ENCODE measurements at regions of chr12 and their contacts with region 1.

Region 1: GRCh38 chr12:62917926-62918325 is 17.0 kb downstream of the PPM1H start:
- DNase-seq: no peak
- H3K4me3 ChIP-seq: no peak overlapping the region
- H3K4me3 Mint-ChIP-seq: no peak overlapping the region
- H3K27ac Mint-ChIP-seq: no peak overlapping the region
- H3K4me1 ChIP-seq: peaks cover 13% of the 10 kb centered on the region
- H3K4me1 Mint-ChIP-seq: peaks cover 37% of the 10 kb centered on the region
- H3K27me3 ChIP-seq: no peaks in the 10 kb centered on the region
- H3K27me3 Mint-ChIP-seq: no peaks in the 10 kb centered on the region
- CTCF ChIP-seq: no peak

Region 2: DNA sequence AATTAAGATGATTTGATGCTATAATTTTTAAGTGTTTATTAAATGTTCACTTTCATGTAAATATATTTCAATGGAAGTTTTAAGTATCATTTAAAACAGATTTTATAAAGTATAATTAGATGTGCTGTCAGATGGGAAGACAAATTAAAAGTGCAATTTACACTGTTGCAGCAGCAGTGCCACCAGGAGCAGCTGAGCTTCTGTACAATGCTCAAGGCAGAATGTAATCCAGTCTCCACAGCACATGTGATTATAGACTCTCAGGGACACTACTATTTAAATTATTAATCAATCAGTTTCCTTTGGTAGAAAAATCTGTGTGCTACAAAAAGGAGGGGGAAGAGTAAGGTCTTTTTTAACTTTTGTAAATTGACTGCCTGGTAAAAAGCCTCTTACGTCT is 943.5 kb before region 1 on chr12:
- CTCF ChIA-PET with region 1: no interaction called
- POLR2A ChIA-PET with region 1: no interaction called
- intact Hi-C with region 1: no loop called
- DNase-seq: no peak
- H3K4me3 ChIP-seq: no peak overlapping the region
- H3K4me3 Mint-ChIP-seq: no peak overlapping the region
- H3K27ac Mint-ChIP-seq: no peak overlapping the region
- H3K4me1 ChIP-seq: no peaks in the 10 kb centered on the region
- H3K4me1 Mint-ChIP-seq: no peaks in the 10 kb centered on the region
- H3K27me3 ChIP-seq: no peaks in the 10 kb centered on the region
- H3K27me3 Mint-ChIP-seq: no peaks in the 10 kb centered on the region
- CTCF ChIP-seq: no peak

Region 3: DNA sequence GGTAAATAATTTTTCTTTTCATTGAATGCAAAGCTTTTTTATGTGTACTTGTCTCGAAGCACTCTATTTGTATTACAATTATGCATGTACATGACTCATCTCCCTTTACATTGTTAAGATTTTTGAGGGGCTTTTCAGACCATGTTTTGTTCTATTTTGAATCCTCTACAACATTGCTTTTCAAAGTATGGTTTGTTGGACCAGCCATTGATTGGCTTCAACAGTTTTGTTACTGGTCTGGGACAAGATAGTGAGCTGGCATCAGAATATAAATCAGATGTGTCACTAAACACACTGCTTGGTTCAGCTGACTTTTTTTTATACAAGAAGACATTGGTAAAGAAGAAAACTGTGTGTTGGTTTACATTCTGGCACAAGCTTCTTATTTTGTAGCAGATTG is 329.0 kb before region 1 on chr12:
- CTCF ChIA-PET with region 1: no interaction called
- POLR2A ChIA-PET with region 1: no interaction called
- intact Hi-C with region 1: no loop called
- DNase-seq: no peak
- H3K4me3 ChIP-seq: no peak overlapping the region
- H3K4me3 Mint-ChIP-seq: no peak overlapping the region
- H3K27ac Mint-ChIP-seq: no peak overlapping the region
- H3K4me1 ChIP-seq: no peaks in the 10 kb centered on the region
- H3K4me1 Mint-ChIP-seq: no peaks in the 10 kb centered on the region
- H3K27me3 ChIP-seq: no peaks in the 10 kb centered on the region
- H3K27me3 Mint-ChIP-seq: no peaks in the 10 kb centered on the region
- CTCF ChIP-seq: no peak

Region 4: GRCh38 chr12:62744551-62744950 is 173.4 kb before region 1 on chr12:
- CTCF ChIA-PET with region 1: no interaction called
- POLR2A ChIA-PET with region 1: no interaction called
- intact Hi-C with region 1: no loop called
- DNase-seq: no peak
- H3K4me3 ChIP-seq: no peak overlapping the region
- H3K4me3 Mint-ChIP-seq: no peak overlapping the region
- H3K27ac Mint-ChIP-seq: no peak overlapping the region
- H3K4me1 ChIP-seq: peaks cover 10% of the 10 kb centered on the region; the same call in 1 of the 2 replicates
- H3K4me1 Mint-ChIP-seq: peaks cover 18% of the 10 kb centered on the region
- H3K27me3 ChIP-seq: no peaks in the 10 kb centered on the region
- H3K27me3 Mint-ChIP-seq: no peaks in the 10 kb centered on the region
- CTCF ChIP-seq: no peak

Region 5: DNA sequence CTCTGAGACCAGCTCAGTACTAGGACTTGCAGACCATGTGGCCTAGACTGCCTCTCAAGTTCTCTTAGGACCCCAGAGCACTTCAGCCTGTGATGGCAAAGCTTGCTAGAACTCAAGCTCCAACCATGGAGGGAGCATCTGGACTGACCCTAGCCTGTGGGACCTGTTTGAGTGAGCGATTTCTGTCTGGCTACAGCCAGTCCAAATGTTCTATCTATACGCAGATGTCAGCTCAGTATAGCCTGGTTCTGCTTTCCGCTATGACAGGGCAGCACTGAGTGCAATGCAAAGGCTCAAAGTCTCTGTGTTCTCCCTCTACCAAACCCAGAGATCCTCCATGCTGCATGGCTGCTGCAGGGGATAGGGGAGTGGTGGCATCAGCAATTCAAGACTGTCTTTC is 37.8 kb after region 1 on chr12:
- CTCF ChIA-PET with region 1: no interaction called
- POLR2A ChIA-PET with region 1: no interaction called
- intact Hi-C with region 1: loop called (anchors 1 kb)
- DNase-seq: no peak
- H3K4me3 ChIP-seq: no peak overlapping the region
- H3K4me3 Mint-ChIP-seq: no peak overlapping the region
- H3K27ac Mint-ChIP-seq: no peak overlapping the region
- H3K4me1 ChIP-seq: peaks cover 24% of the 10 kb centered on the region
- H3K4me1 Mint-ChIP-seq: peaks cover 21% of the 10 kb centered on the region
- H3K27me3 ChIP-seq: no peaks in the 10 kb centered on the region
- H3K27me3 Mint-ChIP-seq: no peaks in the 10 kb centered on the region
- CTCF ChIP-seq: no peak

Region 6: GRCh38 chr12:62966990-62967506 is 49.1 kb after region 1 on chr12:
- CTCF ChIA-PET with region 1: no interaction called
- POLR2A ChIA-PET with region 1: no interaction called
- intact Hi-C with region 1: no loop called
- DNase-seq: peak in 1 of 2 experiments; percentile 13
- H3K4me3 ChIP-seq: no peak overlapping the region
- H3K4me3 Mint-ChIP-seq: no peak overlapping the region
- H3K27ac Mint-ChIP-seq: peak overlapping the region; percentile 39
- H3K4me1 ChIP-seq: peaks cover 45% of the 10 kb centered on the region
- H3K4me1 Mint-ChIP-seq: peaks cover 38% of the 10 kb centered on the region
- H3K27me3 ChIP-seq: no peaks in the 10 kb centered on the region
- H3K27me3 Mint-ChIP-seq: no peaks in the 10 kb centered on the region
- CTCF ChIP-seq: no peak